GM12878 (cell line): ENCODE measurements at regions of chr1 and their contacts with region 1.

Region 1: DNA sequence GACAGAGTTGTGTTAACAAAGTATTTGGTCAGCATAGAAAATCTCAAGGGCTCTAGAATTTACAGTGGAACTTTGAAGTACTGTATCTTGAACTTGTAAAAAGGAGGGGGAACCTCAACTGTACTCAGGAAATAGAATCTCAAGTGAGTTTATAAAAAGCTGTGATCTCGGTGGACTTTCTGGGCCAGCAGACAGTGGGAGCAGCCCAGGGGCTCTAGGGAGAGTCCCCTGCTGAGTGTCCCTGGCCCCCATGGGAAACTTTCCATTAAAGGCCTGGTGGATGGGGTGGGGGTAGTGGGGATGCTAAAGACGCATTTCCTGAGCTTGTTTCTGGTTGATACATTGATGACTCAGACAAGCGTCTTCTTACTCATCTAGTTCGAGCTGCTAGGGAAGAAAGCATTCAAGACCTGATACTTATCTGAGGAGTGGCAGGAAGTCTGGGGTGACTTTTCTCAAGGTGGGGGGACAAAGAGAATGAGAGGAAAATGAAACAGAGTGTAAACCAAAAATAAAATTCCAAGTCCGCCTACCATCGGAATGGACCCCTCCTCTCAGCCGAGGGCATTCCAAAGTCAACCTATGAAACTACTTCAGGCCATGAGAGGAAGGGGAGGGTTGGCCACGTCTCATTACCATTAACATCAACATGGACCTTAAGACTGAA is 65.5 kb downstream of the NID1 start:
- DNase-seq: peak; percentile 96
- ATAC-seq: peak; percentile 81
- H3K4me3 ChIP-seq: peak overlapping the region; percentile 46; the same call in 1 of the 2 replicates
- H3K27ac ChIP-seq: peak overlapping the region; percentile 97
- H3K4me1 ChIP-seq: peaks cover 58% of the 10 kb centered on the region
- H3K27me3 ChIP-seq: no peaks in the 10 kb centered on the region
- CTCF ChIP-seq: no peak
- EP300 ChIP-seq: peak; percentile 92 to 94; a peak in 3 of 4 replicates
- POLR2A ChIP-seq: no peak; the same call in 1 of the 2 replicates
- RAD21 ChIP-seq: peak; percentile 15; the same call in 1 of the 2 replicates

Region 2: DNA sequence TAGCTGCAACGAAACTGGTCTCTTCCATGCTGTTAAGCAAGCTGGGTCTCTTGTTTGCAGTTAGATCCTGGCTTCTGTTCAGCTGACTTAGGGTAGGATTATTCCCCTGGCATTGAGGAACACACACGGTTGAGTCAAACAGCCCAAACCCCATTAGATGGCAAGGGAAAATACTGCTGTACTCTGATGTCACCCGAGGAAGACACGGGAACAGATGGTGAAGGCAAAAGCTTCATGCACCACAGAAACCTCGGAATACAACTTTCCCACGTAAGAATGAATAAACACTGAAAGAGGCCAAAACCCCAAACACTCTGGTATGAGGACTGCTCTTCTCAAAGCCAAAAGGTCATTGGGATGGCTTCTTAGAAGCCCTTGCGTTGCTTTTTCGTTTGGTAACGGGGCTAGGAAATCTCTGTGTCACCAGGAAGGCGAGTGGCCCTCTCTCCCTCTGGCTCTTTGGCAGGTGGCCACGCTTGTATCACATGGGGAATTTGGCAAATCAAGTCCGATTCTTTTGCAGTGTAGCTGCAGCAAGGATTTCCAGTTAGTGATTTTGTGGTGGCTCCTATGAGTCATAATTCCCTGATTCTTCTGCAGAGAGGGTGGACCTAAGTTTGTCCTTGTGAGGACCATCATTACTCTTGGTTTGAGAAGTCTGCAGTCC is 116.0 kb before region 1 on chr1:
- CTCF ChIA-PET with region 1: no interaction called
- POLR2A ChIA-PET with region 1: no interaction called
- RAD21 ChIA-PET with region 1: interaction called, 6 read pairs
- SMC1A ChIA-PET with region 1: interaction called, 6 read pairs
- in situ Hi-C with region 1: no loop called
- intact Hi-C with region 1: loop called (anchors 5 kb)
- DNase-seq: peak; percentile 76
- ATAC-seq: peak; percentile 50
- H3K4me3 ChIP-seq: peak overlapping the region; percentile 33
- H3K27ac ChIP-seq: peak overlapping the region; percentile 71
- H3K4me1 ChIP-seq: peaks cover 36% of the 10 kb centered on the region
- H3K27me3 ChIP-seq: no peaks in the 10 kb centered on the region
- CTCF ChIP-seq: no peak
- EP300 ChIP-seq: no peak
- POLR2A ChIP-seq: no peak
- RAD21 ChIP-seq: no peak

Region 3: DNA sequence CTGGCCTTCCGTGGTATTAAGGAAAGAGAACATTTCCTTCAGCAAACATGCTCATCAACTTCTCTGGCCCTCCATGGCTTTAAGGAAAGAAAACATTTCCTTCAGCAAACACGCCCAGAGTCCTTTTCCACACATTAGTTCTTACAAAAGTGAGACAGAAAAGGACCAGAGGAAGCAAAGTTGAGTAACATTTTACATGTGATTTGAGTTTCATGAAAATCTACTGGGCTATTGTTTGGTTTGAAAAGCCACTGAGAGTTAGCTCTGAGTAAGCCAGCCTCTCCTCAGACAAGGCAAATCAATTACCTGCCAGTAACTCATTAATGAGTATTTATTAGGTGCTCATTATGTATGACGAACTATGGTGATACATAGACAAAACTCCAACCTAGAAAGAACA is 12.5 kb before region 1 on chr1:
- CTCF ChIA-PET with region 1: no interaction called
- POLR2A ChIA-PET with region 1: interaction called, 3 read pairs
- RAD21 ChIA-PET with region 1: no interaction called
- SMC1A ChIA-PET with region 1: interaction called, 9 read pairs
- in situ Hi-C with region 1: no loop called
- intact Hi-C with region 1: loop called (anchors 1 kb)
- DNase-seq: no peak
- ATAC-seq: peak; percentile 90
- H3K4me3 ChIP-seq: no peak overlapping the region
- H3K27ac ChIP-seq: no peak overlapping the region
- H3K4me1 ChIP-seq: peaks cover 7% of the 10 kb centered on the region; the same call in 1 of the 2 replicates
- H3K27me3 ChIP-seq: no peaks in the 10 kb centered on the region
- CTCF ChIP-seq: no peak
- EP300 ChIP-seq: peak; percentile 29 to 30; a peak in 1 of 4 replicates
- POLR2A ChIP-seq: no peak
- RAD21 ChIP-seq: no peak

Region 4: GRCh38 chr1:236064674-236065508 is 65.5 kb after region 1 on chr1 and contains the start of gene NID1:
- CTCF ChIA-PET with region 1: interaction called, 7 read pairs
- POLR2A ChIA-PET with region 1: interaction called, 22 read pairs
- RAD21 ChIA-PET with region 1: interaction called, 19 read pairs
- SMC1A ChIA-PET with region 1: interaction called, 17 read pairs
- in situ Hi-C with region 1: no loop called
- intact Hi-C with region 1: loop called (anchors 2 kb)
- DNase-seq: no peak
- ATAC-seq: peak; percentile 67
- H3K4me3 ChIP-seq: peak within 1 kb of the TSS; percentile 70
- H3K27ac ChIP-seq: peak within 1 kb of the TSS; percentile 41
- H3K4me1 ChIP-seq: peaks cover 12% of the 10 kb centered on the region
- H3K27me3 ChIP-seq: no peaks in the 10 kb centered on the region
- CTCF ChIP-seq: peak in 2 of 3 experiments; percentile 2 to 25; a peak in 2 of 6 replicates
- EP300 ChIP-seq: no peak
- POLR2A ChIP-seq: peak; percentile 11; the same call in 1 of the 2 replicates
- RAD21 ChIP-seq: no peak
- polyA plus RNA-seq, gene NID1: 4.2 to 4.9 TPM

Region 5: GRCh38 chr1:236281654-236282424 is 282.4 kb after region 1 on chr1 and contains the start of gene ERO1B:
- CTCF ChIA-PET with region 1: no interaction called
- POLR2A ChIA-PET with region 1: no interaction called
- RAD21 ChIA-PET with region 1: no interaction called
- SMC1A ChIA-PET with region 1: interaction called, 5 read pairs
- in situ Hi-C with region 1: no loop called
- intact Hi-C with region 1: loop called (anchors 5 kb)
- DNase-seq: peak; percentile 73
- ATAC-seq: peak; percentile 86
- H3K4me3 ChIP-seq: peak within 1 kb of the TSS; percentile 85
- H3K27ac ChIP-seq: peak within 1 kb of the TSS; percentile 88
- H3K4me1 ChIP-seq: peaks cover 33% of the 10 kb centered on the region
- H3K27me3 ChIP-seq: no peaks in the 10 kb centered on the region
- CTCF ChIP-seq: no peak
- EP300 ChIP-seq: no peak
- POLR2A ChIP-seq: peak; percentile 99
- RAD21 ChIP-seq: no peak
- polyA plus RNA-seq, gene ERO1B: 9.0 to 9.6 TPM

Region 6: GRCh38 chr1:236800002-236800620 is 800.7 kb after region 1 on chr1:
- CTCF ChIA-PET with region 1: no interaction called
- POLR2A ChIA-PET with region 1: no interaction called
- RAD21 ChIA-PET with region 1: no interaction called
- SMC1A ChIA-PET with region 1: no interaction called
- in situ Hi-C with region 1: no loop called
- intact Hi-C with region 1: no loop called
- DNase-seq: no peak
- ATAC-seq: no peak
- H3K4me3 ChIP-seq: no peak overlapping the region
- H3K27ac ChIP-seq: no peak overlapping the region
- H3K4me1 ChIP-seq: peaks cover 7% of the 10 kb centered on the region
- H3K27me3 ChIP-seq: no peaks in the 10 kb centered on the region
- CTCF ChIP-seq: no peak
- EP300 ChIP-seq: no peak
- POLR2A ChIP-seq: no peak
- RAD21 ChIP-seq: no peak